ENCODE measurements at regions of chr1 and their contacts with region 1.

Region 1: GRCh38 chr1:201119206-201120197 is 7.3 kb upstream of the CACNA1S start:
- DNase-seq: peak; percentile 82
- H3K4me3 Mint-ChIP-seq: no peak overlapping the region
- H3K27ac Mint-ChIP-seq: no peak overlapping the region
- H3K4me1 Mint-ChIP-seq: peaks cover 3% of the 10 kb centered on the region
- H3K27me3 Mint-ChIP-seq: peaks cover 2% of the 10 kb centered on the region

Region 2: DNA sequence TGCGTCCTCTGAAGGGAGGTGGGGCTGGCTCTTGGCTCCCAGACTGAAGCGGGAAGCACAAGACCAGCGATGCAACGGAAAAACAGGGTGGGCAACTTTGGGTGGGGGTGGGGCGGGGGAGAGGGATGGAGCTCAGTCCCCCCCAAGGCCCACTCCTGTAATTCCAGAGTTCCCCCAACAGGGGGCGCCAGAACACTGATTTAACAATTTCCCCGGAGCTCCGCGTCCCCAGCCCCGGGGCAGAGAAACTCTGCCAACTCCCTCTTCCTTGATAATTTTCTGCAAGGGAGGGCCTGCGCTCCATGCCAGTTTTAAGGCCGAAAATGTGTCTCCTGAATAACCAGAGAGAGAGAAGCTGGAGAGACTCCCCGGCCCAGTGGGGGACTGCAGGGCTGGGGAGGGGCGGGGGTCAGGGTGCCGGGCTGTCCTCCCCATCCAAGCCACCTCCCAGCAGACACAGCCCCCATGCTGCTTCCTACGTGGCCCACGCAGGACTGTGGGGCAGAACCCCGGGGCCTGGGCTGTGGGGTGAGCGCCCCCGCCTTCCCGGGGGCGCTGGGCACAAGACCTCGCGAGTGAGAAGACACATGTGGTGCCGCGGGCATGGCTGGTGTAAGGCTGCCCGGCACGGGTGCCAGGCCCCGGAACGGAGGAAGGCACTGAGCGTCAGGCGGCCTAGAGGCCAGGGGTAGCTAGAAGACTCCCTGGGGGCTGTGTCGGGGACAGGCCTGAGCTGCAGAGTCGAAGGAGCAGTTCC is 147.4 kb before region 1 on chr1:
- CTCF ChIA-PET with region 1: interaction called, 20 read pairs
- intact Hi-C with region 1: loop called (anchors 1 kb)
- DNase-seq: peak; percentile 76
- H3K4me3 Mint-ChIP-seq: no peak overlapping the region
- H3K27ac Mint-ChIP-seq: no peak overlapping the region
- H3K4me1 Mint-ChIP-seq: peaks cover 4% of the 10 kb centered on the region
- H3K27me3 Mint-ChIP-seq: no peaks in the 10 kb centered on the region

Region 3: GRCh38 chr1:201080135-201080534 is 39.4 kb before region 1 on chr1:
- CTCF ChIA-PET with region 1: interaction called, 13 read pairs
- intact Hi-C with region 1: no loop called
- DNase-seq: no peak
- H3K4me3 Mint-ChIP-seq: no peak overlapping the region
- H3K27ac Mint-ChIP-seq: no peak overlapping the region
- H3K4me1 Mint-ChIP-seq: no peaks in the 10 kb centered on the region
- H3K27me3 Mint-ChIP-seq: no peaks in the 10 kb centered on the region

Region 4: DNA sequence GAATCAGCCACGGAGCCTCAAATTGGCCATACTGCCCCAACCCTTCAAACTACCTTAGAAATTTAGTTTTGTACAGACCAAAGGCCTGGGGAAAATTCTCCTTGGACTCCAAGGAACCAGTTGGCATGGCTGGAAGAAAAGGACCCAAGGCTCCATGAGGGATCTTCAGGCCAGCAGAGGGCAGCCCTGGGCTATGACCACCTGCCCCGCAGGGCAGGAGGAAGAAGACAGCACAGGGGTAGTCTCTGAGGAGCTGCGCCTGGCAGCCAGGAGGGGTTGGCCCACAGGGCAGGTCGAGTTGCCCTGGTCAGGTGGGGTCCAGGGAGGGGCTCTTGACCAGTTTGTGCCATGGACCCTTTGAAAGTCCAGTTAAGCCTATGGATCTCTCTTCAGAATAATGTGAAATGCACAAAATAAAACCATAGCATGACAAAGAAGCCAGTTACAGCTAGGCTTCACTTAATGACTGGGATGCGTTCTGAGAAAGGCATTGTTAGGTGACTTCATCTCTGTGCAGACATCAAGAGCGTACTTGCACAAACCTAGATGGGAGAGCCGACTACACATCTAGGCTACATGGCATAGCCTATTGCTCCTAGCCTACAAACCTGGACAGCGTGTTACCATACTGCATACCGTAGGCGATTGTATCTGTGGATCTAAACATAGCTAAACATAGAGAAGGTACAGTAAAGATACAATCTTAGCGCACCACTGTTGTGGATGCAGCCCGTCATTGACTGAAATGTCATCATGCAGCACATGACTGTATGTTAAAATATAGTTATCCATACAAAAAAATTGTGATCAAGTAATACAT is 33.4 kb before region 1 on chr1:
- CTCF ChIA-PET with region 1: interaction called, 13 read pairs
- intact Hi-C with region 1: loop called (anchors 1 kb)
- DNase-seq: peak; percentile 66
- H3K4me3 Mint-ChIP-seq: no peak overlapping the region
- H3K27ac Mint-ChIP-seq: no peak overlapping the region
- H3K4me1 Mint-ChIP-seq: no peaks in the 10 kb centered on the region
- H3K27me3 Mint-ChIP-seq: peaks cover 2% of the 10 kb centered on the region

Region 5: DNA sequence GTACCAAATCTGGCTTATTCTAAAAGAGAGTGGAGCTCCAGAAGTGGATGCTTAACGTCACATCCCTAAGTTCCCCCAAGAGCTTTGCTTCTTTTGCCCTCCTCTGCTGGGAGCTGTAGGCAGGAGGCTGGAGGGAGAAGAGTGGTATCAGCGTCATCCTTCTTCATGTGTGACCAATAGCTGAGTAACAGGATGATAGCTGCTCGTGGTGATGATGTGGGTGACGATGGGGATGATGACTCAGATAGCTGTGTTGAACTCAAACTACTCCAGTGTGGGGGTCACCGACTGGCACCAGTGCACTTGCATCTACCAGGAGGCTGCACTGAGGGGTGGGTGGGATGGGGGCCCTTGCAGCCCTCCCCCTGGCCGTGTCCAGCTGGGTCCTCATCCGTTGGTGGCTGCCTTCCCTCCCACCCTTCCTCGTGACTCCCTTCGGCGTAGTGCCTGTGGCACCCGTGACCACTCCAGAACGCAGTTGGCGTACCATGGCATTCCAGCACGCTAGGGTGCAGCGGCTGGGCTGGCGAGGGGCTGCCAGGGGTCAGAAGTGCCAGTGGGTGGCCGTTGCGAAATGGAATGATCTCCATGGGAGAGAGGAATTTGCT is 72.3 kb after region 1 on chr1:
- CTCF ChIA-PET with region 1: no interaction called
- intact Hi-C with region 1: no loop called
- DNase-seq: peak; percentile 53
- H3K4me3 Mint-ChIP-seq: no peak overlapping the region
- H3K27ac Mint-ChIP-seq: no peak overlapping the region
- H3K4me1 Mint-ChIP-seq: no peaks in the 10 kb centered on the region
- H3K27me3 Mint-ChIP-seq: peaks cover 4% of the 10 kb centered on the region

Measured in activated naive CD4-positive, alpha-beta T cell treated with anti-CD3 and anti-CD28 coated beads for 36 hours (primary cell).